AG04449 (cell line): ENCODE measurements at regions of chr15 and their contacts with region 1.

Region 1: GRCh38 chr15:89171136-89172072 is 50.0 kb downstream of the RLBP1 start:
- DNase-seq: no peak
- H3K4me3 ChIP-seq: no peak overlapping the region
- CTCF ChIP-seq: peak; percentile 74

Region 2: DNA sequence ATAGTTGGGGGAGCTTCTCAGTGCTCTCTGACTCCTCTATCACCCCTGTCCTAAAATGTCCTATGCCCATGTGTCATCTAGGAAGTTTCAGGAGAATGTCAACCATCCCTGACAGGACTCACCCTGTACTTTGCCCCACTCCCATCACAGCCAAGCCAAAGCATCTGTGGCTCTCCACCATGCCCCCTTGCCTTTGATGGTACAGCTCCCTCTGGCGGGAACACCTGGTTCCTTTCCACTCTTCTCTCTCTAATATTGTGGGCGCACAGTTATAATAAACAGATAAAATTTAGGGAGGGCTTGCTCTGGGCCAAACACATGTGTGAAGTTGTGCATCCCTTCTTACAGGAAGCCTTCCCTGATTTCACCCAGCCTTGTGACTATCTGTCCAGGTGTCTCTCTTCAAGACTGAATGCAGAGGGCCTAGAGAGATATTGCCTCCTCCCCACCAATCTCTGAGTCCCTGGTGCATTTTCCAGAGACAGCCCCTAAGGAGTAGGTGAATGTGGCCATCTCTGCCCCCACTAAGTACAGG is 469.8 kb before region 1 on chr15:
- CTCF ChIA-PET with region 1: no interaction called
- POLR2A ChIA-PET with region 1: no interaction called
- DNase-seq: no peak
- H3K4me3 ChIP-seq: no peak overlapping the region
- CTCF ChIP-seq: no peak

Region 3: DNA sequence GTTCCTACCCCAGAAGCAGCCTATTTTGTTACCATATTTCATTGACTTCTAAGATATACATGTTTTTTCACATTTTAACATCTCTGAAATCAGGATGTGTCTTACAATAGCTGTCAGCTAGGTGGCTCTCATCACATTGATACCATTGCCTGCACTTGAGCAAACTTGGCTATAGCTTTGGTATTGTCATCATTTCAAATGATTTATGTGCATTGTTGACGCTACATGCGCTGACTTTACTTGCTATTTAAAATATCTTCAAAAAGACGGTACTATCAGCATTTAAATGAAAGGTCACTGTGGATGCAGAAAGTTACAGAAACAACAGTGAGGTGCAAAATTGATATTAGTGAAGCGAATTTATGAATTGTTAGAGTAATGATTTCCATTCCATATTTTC is 137.1 kb before region 1 on chr15:
- CTCF ChIA-PET with region 1: interaction called, 10 read pairs
- POLR2A ChIA-PET with region 1: no interaction called
- DNase-seq: no peak
- H3K4me3 ChIP-seq: no peak overlapping the region
- CTCF ChIP-seq: peak; percentile 43

Region 4: GRCh38 chr15:89087830-89088604 is 83.4 kb before region 1 on chr15 and contains the start of gene ABHD2:
- CTCF ChIA-PET with region 1: interaction called, 13 read pairs
- POLR2A ChIA-PET with region 1: no interaction called
- DNase-seq: peak; percentile 100
- H3K4me3 ChIP-seq: peak within 1 kb of the TSS; percentile 82
- CTCF ChIP-seq: no peak

Region 5: DNA sequence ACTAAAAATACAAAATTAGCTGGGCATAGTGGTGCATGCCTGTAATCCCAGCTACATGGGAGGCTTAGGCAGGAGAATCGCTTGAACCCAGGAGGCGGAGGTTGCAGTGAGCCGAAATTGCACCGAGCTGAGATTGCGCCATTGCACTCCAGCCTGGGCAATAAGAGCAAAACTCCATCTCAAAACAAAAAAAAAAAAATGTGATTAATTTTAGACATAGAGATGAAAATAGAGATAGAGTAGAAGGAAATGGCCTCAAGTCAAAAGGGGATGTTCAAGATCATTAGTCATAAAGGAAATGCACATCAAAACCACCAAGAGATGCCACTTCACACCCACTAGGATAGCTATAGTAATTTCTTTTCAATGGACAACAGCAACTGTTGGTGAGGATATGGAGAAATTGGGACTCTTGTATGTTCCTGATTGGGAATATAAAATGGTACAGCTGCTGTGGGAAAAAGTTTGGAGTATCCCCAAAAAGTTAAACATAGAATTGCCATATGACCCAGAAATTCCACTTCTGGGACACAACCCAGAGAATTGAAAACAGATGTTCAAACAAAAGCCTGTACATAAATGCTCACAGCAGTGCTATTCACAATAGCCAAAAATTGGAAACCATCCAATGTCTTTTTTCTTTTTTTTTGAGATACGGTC is 27.8 kb before region 1 on chr15:
- CTCF ChIA-PET with region 1: interaction called, 38 read pairs
- POLR2A ChIA-PET with region 1: no interaction called
- DNase-seq: no peak
- H3K4me3 ChIP-seq: no peak overlapping the region
- CTCF ChIP-seq: no peak

Region 6: GRCh38 chr15:89150762-89151664 is 20.4 kb before region 1 on chr15:
- CTCF ChIA-PET with region 1: interaction called, 38 read pairs
- POLR2A ChIA-PET with region 1: no interaction called
- DNase-seq: no peak
- H3K4me3 ChIP-seq: no peak overlapping the region
- CTCF ChIP-seq: no peak

Region 7: GRCh38 chr15:89278307-89278706 is 106.9 kb after region 1 on chr15:
- CTCF ChIA-PET with region 1: no interaction called
- POLR2A ChIA-PET with region 1: no interaction called
- DNase-seq: no peak
- H3K4me3 ChIP-seq: no peak overlapping the region
- CTCF ChIP-seq: no peak